Activated B cell treated with CpG ODN at 0.5 μM for 24 hours (primary cell): ENCODE measurements at regions of chr10 and their contacts with region 1.

Region 1: DNA sequence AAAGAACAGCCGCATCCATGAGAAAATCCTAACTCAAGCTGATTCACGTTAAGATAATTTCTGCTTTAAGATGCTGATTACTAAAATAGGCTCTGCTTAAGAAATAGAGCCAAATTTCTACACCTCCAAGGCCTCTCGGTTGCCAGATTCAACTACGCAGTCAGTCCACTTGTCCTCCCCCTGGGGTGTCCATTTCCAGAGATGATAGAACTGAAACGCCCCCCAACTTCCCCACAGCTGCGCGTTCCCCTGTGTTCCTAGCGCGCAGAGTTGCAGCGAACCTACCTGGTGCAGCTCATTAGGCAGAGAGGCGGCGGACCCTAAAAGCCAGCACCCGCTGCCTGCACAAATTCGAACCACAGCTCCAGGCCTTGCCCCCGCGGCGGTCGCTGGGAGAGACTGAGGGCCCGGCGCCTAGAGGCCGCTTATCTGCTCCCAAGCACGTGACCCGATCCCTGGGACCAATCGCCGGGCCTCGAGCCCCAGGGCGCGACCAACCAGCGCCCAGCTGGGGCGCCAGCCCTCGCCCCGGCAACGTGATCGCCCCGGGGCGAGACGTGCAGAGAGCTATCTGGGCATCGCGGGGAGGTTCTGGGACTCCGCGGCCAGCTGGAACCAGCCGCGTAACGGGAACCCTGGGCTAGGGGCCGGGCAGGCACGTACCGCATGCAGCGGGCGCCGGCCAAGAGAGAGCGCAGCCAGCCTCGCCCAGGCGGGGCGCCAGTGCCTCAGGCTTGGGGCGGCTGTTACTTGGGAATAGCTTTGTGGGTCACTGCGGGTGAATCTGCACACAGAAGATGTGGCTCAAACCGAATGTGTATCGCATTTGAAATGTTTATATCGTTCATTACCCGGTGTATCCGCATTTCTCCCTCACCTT is at the start of gene PPP1R3C:
- DNase-seq: peak; percentile 32
- ATAC-seq: peak; percentile 74
- H3K4me3 Mint-ChIP-seq: peak within 1 kb of the TSS; percentile 75
- H3K27ac Mint-ChIP-seq: no peak within 1 kb of the TSS
- H3K4me1 Mint-ChIP-seq: peaks cover 14% of the 10 kb centered on the region
- H3K27me3 Mint-ChIP-seq: peaks cover 46% of the 10 kb centered on the region
- CTCF ChIP-seq: no peak
- total RNA-seq, gene PPP1R3C: not detected in 2 replicates

Region 2: GRCh38 chr10:90751107-90751997 is 881.6 kb before region 1 on chr10:
- CTCF ChIA-PET with region 1: no interaction called
- POLR2A ChIA-PET with region 1: no interaction called
- intact Hi-C with region 1: loop called (anchors 1 kb)
- DNase-seq: no peak
- ATAC-seq: peak; percentile 54
- H3K4me3 Mint-ChIP-seq: no peak overlapping the region
- H3K27ac Mint-ChIP-seq: no peak overlapping the region
- H3K4me1 Mint-ChIP-seq: peaks cover 5% of the 10 kb centered on the region
- H3K27me3 Mint-ChIP-seq: peaks cover 13% of the 10 kb centered on the region
- CTCF ChIP-seq: no peak

Region 3: DNA sequence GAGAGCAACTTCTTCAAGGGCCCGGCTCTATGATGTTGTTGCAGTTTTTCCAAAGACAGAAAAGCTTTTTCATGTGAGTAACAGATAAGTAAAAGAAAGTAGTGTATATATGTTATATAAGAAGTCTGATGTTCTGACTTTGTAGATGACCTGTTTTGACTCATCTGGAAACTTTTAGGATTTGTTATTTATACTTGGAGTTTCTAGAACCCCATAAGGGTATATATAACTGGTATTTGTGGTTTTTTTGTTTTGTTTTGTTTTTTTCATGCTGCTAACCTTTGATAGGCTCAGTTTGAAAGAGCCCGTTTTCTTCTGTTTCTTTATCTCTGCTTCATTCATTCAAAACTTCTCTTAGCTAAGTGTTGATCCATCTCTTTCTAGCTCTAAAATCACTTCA is 753.8 kb before region 1 on chr10:
- CTCF ChIA-PET with region 1: interaction called, 16 read pairs
- POLR2A ChIA-PET with region 1: no interaction called
- intact Hi-C with region 1: loop called (anchors 1 kb)
- DNase-seq: no peak
- ATAC-seq: no peak
- H3K4me3 Mint-ChIP-seq: no peak overlapping the region
- H3K27ac Mint-ChIP-seq: no peak overlapping the region
- H3K4me1 Mint-ChIP-seq: peaks cover 2% of the 10 kb centered on the region
- H3K27me3 Mint-ChIP-seq: no peaks in the 10 kb centered on the region
- CTCF ChIP-seq: no peak

Region 4: DNA sequence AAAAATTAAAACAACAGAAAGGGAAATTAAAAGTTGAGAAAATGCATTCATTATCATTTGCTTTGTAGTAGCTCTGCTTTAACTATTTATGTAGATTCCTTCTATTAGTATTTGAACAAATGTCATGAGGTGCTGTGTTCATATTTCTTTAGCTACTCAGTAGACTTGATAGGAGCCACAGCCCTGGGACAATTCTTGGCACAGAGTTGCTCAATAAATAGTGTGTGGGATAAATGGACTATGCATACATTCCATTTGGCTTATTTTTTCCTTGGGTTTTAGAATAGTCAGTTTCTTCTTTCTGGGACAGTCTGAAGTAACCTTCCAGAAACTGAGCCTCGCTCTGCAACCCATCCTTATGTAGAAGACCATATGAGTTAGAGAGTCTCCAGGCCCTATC is 747.7 kb before region 1 on chr10:
- CTCF ChIA-PET with region 1: interaction called, 16 read pairs
- POLR2A ChIA-PET with region 1: no interaction called
- intact Hi-C with region 1: loop called (anchors 1 kb)
- DNase-seq: no peak
- ATAC-seq: no peak
- H3K4me3 Mint-ChIP-seq: no peak overlapping the region
- H3K27ac Mint-ChIP-seq: no peak overlapping the region
- H3K4me1 Mint-ChIP-seq: no peaks in the 10 kb centered on the region
- H3K27me3 Mint-ChIP-seq: no peaks in the 10 kb centered on the region
- CTCF ChIP-seq: no peak

Region 5: GRCh38 chr10:90912174-90912573 is 720.7 kb before region 1 on chr10:
- CTCF ChIA-PET with region 1: interaction called, 7 read pairs
- POLR2A ChIA-PET with region 1: no interaction called
- intact Hi-C with region 1: loop called (anchors 10 kb)
- DNase-seq: no peak
- ATAC-seq: no peak
- H3K4me3 Mint-ChIP-seq: no peak overlapping the region
- H3K27ac Mint-ChIP-seq: no peak overlapping the region
- H3K4me1 Mint-ChIP-seq: peaks cover 19% of the 10 kb centered on the region
- H3K27me3 Mint-ChIP-seq: no peaks in the 10 kb centered on the region
- CTCF ChIP-seq: no peak

Region 6: DNA sequence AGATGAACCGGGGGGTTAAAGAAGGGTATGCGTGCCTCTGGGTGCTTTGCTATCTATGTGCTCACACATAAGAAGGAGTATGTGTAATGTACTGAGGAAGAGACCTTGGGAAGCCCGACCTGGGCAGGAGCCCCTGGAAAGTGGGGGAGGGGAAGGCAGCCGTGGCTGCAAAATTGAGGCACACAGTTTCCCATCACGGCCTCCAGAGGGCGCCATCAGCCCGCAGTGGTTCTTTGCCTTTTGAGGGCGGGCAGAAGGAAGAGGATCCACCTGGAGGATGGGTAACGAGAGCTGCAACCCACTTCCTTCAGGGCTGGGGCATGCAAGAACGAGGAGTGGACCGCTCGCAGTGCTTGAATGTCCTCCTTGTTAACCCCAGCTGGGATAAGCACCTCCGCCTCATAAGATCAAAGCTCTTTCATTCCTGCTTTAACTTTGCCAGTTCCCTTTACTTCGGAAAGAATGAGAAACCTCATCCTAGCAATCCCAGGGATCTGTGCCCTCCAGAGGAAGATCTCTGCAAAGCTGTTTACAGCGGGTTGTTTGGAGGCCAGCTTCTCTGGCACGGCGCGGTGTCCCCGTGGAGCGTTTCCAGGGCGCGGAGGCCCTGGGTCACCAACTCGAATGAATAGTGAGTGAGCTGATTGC is 334.6 kb before region 1 on chr10:
- CTCF ChIA-PET with region 1: interaction called, 12 read pairs
- POLR2A ChIA-PET with region 1: no interaction called
- intact Hi-C with region 1: loop called (anchors 1 kb)
- DNase-seq: peak; percentile 58
- ATAC-seq: peak; percentile 97
- H3K4me3 Mint-ChIP-seq: peak overlapping the region; percentile 70
- H3K27ac Mint-ChIP-seq: no peak overlapping the region
- H3K4me1 Mint-ChIP-seq: peaks cover 9% of the 10 kb centered on the region
- H3K27me3 Mint-ChIP-seq: peaks cover 8% of the 10 kb centered on the region
- CTCF ChIP-seq: peak; percentile 53

Region 7: GRCh38 chr10:91935884-91936283 is 303.0 kb after region 1 on chr10:
- CTCF ChIA-PET with region 1: no interaction called
- POLR2A ChIA-PET with region 1: no interaction called
- intact Hi-C with region 1: no loop called
- DNase-seq: no peak
- ATAC-seq: no peak
- H3K4me3 Mint-ChIP-seq: no peak overlapping the region
- H3K27ac Mint-ChIP-seq: no peak overlapping the region
- H3K4me1 Mint-ChIP-seq: peaks cover 38% of the 10 kb centered on the region
- H3K27me3 Mint-ChIP-seq: no peaks in the 10 kb centered on the region
- CTCF ChIP-seq: no peak